ENCODE measurements at regions of chr12 and their contacts with region 1.

Region 1: DNA sequence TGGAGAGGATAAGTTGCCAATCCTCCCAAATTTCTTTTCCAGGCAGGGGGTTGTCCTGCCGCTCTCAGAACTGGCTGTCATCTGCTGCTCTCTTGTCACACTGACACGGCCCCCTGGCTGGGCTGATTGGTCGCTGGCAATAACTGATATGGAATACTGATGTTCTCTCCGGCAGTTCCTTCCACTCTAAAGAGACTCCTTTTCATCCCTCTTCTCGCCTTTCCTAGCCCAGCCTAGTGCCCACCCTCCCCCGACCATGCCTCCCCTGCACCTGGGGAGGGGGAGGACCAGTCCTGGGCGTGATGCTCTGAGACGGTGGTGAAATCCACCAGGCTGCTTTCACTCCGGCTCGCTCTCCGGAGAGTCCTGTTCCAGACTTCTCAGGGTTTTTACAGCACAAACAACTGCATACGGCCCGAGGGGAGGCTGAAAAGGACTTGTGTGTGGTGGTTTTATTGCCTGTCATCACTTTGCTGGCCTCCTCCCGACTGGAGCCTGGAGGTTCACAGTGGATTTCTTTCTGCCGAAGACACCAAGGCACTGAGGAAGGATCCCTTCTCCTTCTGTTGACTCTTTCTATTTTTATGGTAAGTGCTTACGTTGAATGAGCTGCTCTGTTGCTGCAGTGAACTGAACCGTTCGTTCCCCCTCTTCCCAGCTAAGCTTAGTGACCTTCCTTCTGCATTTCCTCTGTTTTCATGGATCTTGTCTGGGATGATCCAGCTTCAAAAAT is at the start of gene ANO4:
- DNase-seq: no peak
- total RNA-seq, gene ANO4: 0.33 to 0.83 TPM

Region 2: DNA sequence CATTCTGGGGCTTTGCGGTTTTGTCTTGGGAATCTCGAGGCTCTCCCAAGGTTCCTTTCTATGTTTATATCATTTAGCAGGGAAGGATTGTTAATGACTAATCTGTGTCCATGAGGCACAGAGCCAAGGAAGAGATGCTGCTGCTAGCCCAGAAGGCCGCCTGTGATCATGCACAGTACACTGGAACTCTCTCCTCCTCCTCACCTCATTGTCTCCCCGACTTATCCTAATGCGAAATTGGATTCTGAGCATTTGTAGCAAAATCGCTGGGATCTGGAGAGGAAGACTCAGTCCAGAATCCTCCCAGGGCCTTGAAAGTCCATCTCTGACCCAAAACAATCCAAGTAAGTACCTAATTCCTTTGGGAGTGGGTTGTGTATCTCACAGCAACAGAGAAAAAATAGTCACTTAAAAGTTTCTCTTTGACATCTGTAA is 320.9 kb before region 1 on chr12 and contains the start of gene NR1H4:
- intact Hi-C with region 1: no loop called
- DNase-seq: no peak
- total RNA-seq, gene NR1H4: 0.93 TPM in 1 of 2 donors, not detected in the other

Region 3: GRCh38 chr12:100539202-100539601 is 255.4 kb before region 1 on chr12:
- intact Hi-C with region 1: no loop called
- DNase-seq: no peak

Region 4: GRCh38 chr12:100661300-100661951 is 133.2 kb before region 1 on chr12:
- intact Hi-C with region 1: no loop called
- DNase-seq: no peak

Region 5: GRCh38 chr12:100858656-100859055 is 64.0 kb after region 1 on chr12:
- intact Hi-C with region 1: loop called in 1 of 2 experiments (anchors 5 kb)
- DNase-seq: no peak

Measured in posterior vena cava (tissue), 2 donors.